Activated CD4-positive, alpha-beta T cell treated with anti-CD3 and anti-CD28 coated beads for 36 hours (primary cell): ENCODE measurements at regions of chr2 and their contacts with region 1.

Region 1: DNA sequence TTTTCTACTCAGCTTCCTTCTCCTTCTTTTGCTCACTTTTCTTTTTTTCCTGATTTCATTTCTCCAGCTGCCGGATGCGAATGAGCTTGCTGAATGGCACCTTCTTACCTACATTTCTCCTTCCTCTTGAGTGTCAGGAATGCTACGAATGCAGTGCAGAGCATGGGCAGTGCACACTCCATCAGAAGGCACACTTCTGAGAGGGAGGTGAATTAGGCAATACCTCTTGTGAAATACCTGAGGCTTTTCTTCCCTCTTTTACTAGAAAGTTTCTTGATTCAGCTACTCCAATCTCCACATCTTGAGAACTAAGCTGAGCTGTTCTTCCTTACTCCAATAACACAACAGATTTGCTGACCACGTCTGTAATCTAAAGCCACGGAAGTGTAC is 51.1 kb downstream of the PLEKHM3 start:
- DNase-seq: no peak
- ATAC-seq: no peak
- H3K4me3 Mint-ChIP-seq: no peak overlapping the region
- H3K27ac Mint-ChIP-seq: no peak overlapping the region
- H3K4me1 Mint-ChIP-seq: peaks cover 22% of the 10 kb centered on the region
- H3K27me3 Mint-ChIP-seq: no peaks in the 10 kb centered on the region

Region 2: DNA sequence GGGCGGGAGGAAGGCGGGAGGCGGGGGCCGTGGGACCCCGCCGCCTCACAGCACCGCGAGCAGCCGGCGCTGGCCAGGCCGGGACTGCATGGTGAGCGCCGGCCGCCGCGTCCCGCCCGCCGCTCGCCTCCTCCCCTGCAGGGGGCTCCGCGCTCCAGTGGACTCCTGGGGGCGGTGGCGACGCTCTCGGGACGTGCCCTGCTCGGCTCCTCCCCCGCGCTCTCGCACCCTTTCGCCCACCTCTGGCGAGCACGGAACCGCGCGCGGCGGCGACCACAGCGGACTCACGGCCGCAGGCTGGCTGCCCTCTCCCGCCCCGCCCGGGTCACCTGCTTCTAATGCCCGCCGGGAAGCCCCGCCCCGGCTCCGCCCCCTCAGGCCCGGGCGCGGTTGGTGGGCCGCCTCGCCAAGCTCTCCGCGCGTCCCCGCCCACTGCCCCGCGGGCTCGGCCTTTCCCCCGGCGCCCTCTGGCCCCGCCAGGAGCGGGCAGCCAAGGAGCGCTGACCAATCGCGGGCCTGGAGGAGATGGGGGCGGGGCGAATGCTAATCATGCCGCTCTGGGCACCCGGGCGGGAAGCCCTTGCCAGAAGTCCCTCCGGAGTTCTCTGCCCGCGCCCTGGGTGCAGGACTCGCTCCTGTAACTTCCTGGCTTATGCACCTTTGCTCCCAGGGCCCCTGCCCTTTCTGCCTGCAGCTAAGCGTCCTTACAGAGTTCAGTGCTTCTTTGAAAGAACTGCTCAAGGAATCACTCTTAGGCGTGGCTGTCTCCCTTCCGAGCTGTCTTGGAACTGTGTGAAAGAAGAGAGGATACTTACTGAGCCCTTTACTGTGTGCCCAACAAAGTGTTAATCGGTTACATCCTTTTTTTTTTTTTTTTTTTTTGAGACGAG is 204.4 kb before region 1 on chr2 and contains the start of gene FZD5:
- CTCF ChIA-PET with region 1: no interaction called
- POLR2A ChIA-PET with region 1: no interaction called
- intact Hi-C with region 1: loop called (anchors 2 to 5 kb)
- DNase-seq: peak; percentile 90
- ATAC-seq: peak; percentile 83
- H3K4me3 Mint-ChIP-seq: peak within 1 kb of the TSS; percentile 79
- H3K27ac Mint-ChIP-seq: no peak within 1 kb of the TSS
- H3K4me1 Mint-ChIP-seq: peaks cover 27% of the 10 kb centered on the region
- H3K27me3 Mint-ChIP-seq: peaks cover 41% of the 10 kb centered on the region
- total RNA-seq, gene FZD5: 1.1 to 1.3 TPM

Region 3: GRCh38 chr2:207951734-207952470 is 22.3 kb before region 1 on chr2:
- CTCF ChIA-PET with region 1: interaction called, 12 read pairs
- POLR2A ChIA-PET with region 1: no interaction called
- intact Hi-C with region 1: no loop called
- DNase-seq: no peak
- ATAC-seq: no peak
- H3K4me3 Mint-ChIP-seq: no peak overlapping the region
- H3K27ac Mint-ChIP-seq: no peak overlapping the region
- H3K4me1 Mint-ChIP-seq: no peaks in the 10 kb centered on the region
- H3K27me3 Mint-ChIP-seq: no peaks in the 10 kb centered on the region

Region 4: DNA sequence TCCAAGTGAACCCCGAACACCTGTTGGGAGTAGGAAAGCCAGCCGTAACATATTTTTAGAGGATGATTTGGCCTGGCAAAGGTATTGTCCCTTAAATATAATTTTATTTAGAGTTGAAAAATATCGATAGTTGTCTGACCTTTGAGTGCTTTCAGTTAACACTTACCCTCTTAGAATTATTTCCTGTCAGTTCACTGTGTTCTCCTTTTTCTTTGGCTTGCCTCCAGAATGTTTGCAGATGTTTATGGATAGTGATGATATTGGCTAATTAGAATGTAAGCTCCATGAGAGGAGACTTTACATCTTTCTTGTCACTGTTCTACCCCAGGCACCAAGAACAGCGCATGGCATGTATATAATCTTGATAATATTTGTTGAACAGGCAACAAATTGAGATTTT is 311.6 kb after region 1 on chr2:
- CTCF ChIA-PET with region 1: no interaction called
- POLR2A ChIA-PET with region 1: no interaction called
- intact Hi-C with region 1: no loop called
- DNase-seq: no peak
- ATAC-seq: no peak
- H3K4me3 Mint-ChIP-seq: no peak overlapping the region
- H3K27ac Mint-ChIP-seq: no peak overlapping the region
- H3K4me1 Mint-ChIP-seq: peaks cover 20% of the 10 kb centered on the region
- H3K27me3 Mint-ChIP-seq: no peaks in the 10 kb centered on the region